HepG2 (cell line): ENCODE measurements at regions of chr2 and their contacts with region 1.

Region 1: GRCh38 chr2:152861349-152861942 is 143.0 kb downstream of the ARL6IP6 start:
- DNase-seq: peak; percentile 43
- ATAC-seq: peak; percentile 81
- H3K4me3 ChIP-seq: no peak overlapping the region
- H3K27ac ChIP-seq: no peak overlapping the region
- H3K4me1 ChIP-seq: no peaks in the 10 kb centered on the region
- H3K27me3 ChIP-seq: no peaks in the 10 kb centered on the region
- CTCF ChIP-seq: peak; percentile 59
- EP300 ChIP-seq: no peak
- POLR2A ChIP-seq: no peak
- RAD21 ChIP-seq: peak; percentile 25; the same call in 1 of the 2 replicates

Region 2: GRCh38 chr2:152743002-152743401 is 118.4 kb before region 1 on chr2:
- CTCF ChIA-PET with region 1: no interaction called
- POLR2A ChIA-PET with region 1: no interaction called
- in situ Hi-C with region 1: no loop called
- intact Hi-C with region 1: no loop called
- DNase-seq: peak; percentile 46
- ATAC-seq: peak; percentile 92
- H3K4me3 ChIP-seq: no peak overlapping the region
- H3K27ac ChIP-seq: no peak overlapping the region
- H3K4me1 ChIP-seq: no peaks in the 10 kb centered on the region
- H3K27me3 ChIP-seq: no peaks in the 10 kb centered on the region
- CTCF ChIP-seq: peak; percentile 53
- EP300 ChIP-seq: no peak
- POLR2A ChIP-seq: no peak
- RAD21 ChIP-seq: no peak

Region 3: DNA sequence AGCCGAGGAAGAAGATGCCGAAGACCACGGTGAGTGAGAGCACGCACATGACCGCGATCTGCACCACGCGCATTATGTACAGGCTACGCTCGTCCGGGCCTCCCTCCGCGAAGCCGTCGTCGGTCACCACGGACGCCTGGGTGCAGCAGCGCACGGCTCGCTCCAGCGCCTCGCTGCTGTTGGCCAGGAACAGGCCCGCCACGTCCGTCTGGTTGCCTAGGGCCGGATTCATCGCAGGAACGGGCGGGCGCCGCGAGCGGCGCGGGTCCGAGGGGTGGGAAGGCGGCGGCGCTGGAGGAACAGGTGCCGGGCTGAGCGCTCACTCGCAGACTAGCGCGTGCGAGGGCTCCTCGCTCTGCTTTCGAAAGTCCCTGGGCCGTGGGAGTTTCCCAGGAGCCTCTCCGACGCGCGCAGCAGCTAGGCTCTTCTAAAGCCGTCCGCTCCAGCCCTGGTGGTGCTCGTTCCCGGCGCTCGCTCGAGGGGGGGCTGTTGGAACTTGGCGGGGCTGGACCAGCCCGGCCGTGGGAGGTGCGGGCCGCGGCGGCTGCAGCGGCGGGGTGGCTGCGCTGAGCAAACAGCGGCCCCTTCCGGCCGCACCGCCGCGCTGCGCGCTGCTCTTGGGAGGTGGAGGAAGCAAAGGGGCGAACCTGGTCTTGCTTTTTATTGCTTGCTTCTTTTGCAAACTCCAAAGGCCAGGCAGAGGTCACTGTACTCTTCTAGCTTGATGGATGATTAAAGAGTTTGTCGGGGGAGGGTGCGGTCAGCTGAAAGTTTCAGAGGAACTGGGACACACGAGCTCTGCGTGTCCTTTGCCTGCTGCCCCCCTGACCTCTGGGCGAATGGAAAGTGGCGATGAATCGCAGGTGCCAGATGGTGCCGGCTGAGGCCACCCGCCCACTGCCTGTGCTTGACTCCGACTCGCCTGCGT is 617.2 kb after region 1 on chr2 and contains the start of gene RPRM:
- CTCF ChIA-PET with region 1: no interaction called
- POLR2A ChIA-PET with region 1: no interaction called
- in situ Hi-C with region 1: no loop called
- intact Hi-C with region 1: loop called (anchors 1 kb)
- DNase-seq: peak; percentile 35
- ATAC-seq: peak; percentile 98
- H3K4me3 ChIP-seq: peak within 1 kb of the TSS; percentile 19 to 63 (median 39); a peak in 4 of 6 replicates
- H3K27ac ChIP-seq: no peak within 1 kb of the TSS
- H3K4me1 ChIP-seq: peaks cover 16% of the 10 kb centered on the region
- H3K27me3 ChIP-seq: peaks cover 6 to 43% of the 10 kb centered on the region in 2 experiments; a peak in 4 of 5 replicates
- CTCF ChIP-seq: peak; percentile 85
- EP300 ChIP-seq: no peak
- POLR2A ChIP-seq: no peak
- RAD21 ChIP-seq: peak; percentile 94
- total RNA-seq, gene RPRM: not detected in 2 replicates

Region 4: GRCh38 chr2:153519257-153519875 is 657.9 kb after region 1 on chr2:
- CTCF ChIA-PET with region 1: interaction called, 4 read pairs
- POLR2A ChIA-PET with region 1: no interaction called
- in situ Hi-C with region 1: no loop called
- intact Hi-C with region 1: loop called (anchors 1 kb)
- DNase-seq: peak; percentile 50
- ATAC-seq: peak; percentile 45; the same call in 2 of the 3 replicates
- H3K4me3 ChIP-seq: no peak overlapping the region
- H3K27ac ChIP-seq: no peak overlapping the region
- H3K4me1 ChIP-seq: no peaks in the 10 kb centered on the region
- H3K27me3 ChIP-seq: no peaks in the 10 kb centered on the region; a peak in 1 of 5 replicates
- CTCF ChIP-seq: peak; percentile 79
- EP300 ChIP-seq: no peak
- POLR2A ChIP-seq: no peak
- RAD21 ChIP-seq: no peak